ENCODE measurements at regions of chr4 and their contacts with region 1.

Region 1: DNA sequence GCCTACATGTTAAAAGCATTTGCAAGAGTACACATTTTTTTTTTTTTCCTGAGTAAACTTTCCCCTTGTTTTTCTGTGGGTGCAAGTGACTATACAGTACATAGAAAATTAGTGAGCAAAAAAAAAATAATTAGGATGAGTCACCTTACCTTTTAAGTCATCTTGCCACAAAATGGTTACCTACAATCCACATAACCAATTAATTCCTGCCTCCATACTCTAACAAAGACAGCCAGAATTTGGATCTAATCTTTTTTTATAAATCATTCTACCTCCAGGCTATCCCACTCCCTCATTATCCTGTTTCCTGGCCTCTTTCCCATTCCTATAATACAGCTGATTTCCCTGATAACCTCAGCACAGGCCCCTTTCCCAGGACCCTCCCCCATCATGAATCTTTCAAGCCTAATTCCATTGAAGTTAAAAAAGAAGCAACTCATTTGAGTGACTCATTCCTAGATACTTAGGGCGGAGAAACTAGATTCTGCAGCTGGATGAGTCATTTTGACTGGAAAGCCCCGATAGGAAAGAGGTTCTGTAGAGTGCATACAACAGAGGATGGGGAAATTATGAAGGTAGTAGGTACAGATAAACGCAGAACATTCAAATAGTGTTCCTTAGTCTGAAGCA is 128.2 kb downstream of the C4orf51 start:
- DNase-seq: peak; percentile 96
- ATAC-seq: peak; percentile 84
- H3K4me3 ChIP-seq: peak overlapping the region; percentile 6 to 23; a peak in 2 of 4 replicates
- H3K27ac ChIP-seq: peak overlapping the region; percentile 88
- H3K4me1 ChIP-seq: peaks cover 46 to 90% of the 10 kb centered on the region in 2 experiments
- H3K27me3 ChIP-seq: no peaks in the 10 kb centered on the region
- CTCF ChIP-seq: no peak
- POLR2A ChIP-seq: no peak
- RAD21 ChIP-seq: peak; percentile 37

Region 2: DNA sequence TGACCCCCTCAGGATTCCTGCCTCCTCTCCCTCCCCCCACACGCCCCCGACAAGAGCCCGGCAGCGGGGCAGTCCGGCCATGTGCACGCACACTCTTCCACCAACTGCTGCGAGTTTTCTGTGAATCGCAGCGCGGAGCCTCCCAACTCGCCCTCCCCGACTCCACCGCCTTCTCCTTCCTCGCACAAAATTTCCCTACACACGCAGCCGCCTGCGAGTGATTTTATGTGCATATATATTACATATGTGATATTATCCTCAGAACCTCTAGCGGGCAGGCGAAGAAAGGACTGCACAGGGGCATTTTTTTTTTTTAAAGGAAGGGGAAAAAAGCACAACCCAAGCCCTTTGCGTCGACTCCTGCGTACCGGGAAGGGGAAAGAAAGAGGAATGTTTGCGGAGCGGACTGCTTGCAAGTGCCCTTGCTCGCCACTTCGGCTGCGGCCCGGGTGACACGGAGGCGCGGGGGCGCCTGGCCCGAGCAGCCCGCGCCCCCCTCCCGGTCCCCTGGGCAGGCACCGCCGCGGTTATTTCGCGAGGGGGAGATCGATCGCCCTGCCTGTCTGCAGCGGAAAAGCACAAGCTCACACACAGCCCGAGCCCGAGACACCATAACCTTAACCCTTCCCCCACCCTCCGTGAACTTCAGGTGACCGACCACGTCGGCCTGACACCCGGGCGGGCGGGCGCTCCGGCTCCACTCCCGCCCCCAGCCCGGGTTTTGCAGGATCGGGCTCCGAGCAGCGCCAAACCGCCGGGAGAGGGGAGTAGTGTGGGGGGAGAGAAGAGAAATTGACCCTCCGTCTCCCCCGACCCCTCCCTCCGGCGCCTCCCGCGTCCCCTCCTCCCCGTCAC is 128.2 kb after region 1 on chr4:
- CTCF ChIA-PET with region 1: interaction called, 4 read pairs
- POLR2A ChIA-PET with region 1: interaction called, 4 read pairs
- RAD21 ChIA-PET with region 1: no interaction called
- intact Hi-C with region 1: loop called (anchors 5 kb)
- DNase-seq: no peak
- ATAC-seq: peak; percentile 56
- H3K4me3 ChIP-seq: peak overlapping the region; percentile 75 to 87
- H3K27ac ChIP-seq: peak overlapping the region; percentile 92
- H3K4me1 ChIP-seq: peaks cover 21 to 46% of the 10 kb centered on the region in 2 experiments
- H3K27me3 ChIP-seq: no peaks in the 10 kb centered on the region
- CTCF ChIP-seq: peak in 1 of 3 experiments; percentile 27; a peak in 1 of 6 replicates
- POLR2A ChIP-seq: no peak
- RAD21 ChIP-seq: no peak

Region 3: DNA sequence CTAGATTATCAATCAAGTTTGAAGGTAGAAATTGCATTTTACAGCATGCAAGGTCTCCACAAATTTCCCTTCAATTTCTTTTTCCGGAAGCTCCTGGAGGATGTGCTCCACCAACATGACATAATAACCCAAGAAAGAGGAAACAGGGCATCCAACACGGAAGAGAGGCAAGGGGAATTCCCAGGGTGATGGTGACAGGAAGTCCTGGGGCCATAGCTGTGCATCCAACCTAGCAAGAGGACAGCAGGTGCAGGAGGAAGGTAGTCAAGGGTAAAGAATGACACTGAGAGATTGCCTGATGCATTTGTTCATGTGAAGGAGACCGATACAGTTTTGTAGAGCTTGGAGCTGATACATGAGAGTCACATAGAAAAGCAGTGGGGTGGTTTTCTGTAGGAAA is 251.7 kb after region 1 on chr4:
- CTCF ChIA-PET with region 1: no interaction called
- POLR2A ChIA-PET with region 1: no interaction called
- RAD21 ChIA-PET with region 1: no interaction called
- intact Hi-C with region 1: no loop called
- DNase-seq: no peak
- ATAC-seq: no peak
- H3K4me3 ChIP-seq: no peak overlapping the region
- H3K27ac ChIP-seq: no peak overlapping the region
- H3K4me1 ChIP-seq: no peaks in the 10 kb centered on the region
- H3K27me3 ChIP-seq: 0 out of 2 replicates have a peak, but pooled peaks cover 6% of the 10 kb centered on the region
- CTCF ChIP-seq: no peak
- POLR2A ChIP-seq: no peak
- RAD21 ChIP-seq: no peak

Measured in HCT116 (cell line).